Mammary epithelial cell (primary cell): ENCODE measurements at regions of chr15 and their contacts with region 1.

Region 1: DNA sequence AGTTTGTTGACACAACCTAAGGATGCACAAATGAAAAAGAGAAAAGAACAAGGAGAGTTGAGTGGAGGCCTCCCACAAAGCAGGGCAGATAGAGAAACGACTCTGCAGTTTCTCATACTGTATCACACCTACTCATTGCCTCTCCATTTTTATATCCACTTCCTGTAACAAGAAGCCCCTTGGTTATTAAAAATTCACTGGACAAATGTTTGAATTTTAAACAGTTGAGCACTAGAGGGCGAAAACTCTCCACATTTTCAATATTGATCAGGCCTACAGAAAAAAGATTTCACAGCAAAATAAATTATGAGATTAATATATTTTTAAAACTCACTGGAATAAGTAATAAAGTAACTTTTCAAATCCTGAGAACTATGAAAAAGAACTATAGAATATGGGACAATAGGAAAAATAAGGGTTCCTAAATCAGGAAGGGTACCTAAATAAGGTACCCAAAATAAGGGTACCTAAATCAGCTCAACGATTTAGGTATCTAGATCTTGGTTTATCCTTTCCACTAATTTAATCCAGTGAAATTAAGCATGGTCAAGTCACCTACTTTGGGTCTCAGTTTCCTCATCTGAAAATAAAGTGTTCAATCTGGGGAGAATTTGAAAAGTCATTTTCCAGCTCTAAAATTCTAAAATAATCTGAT is 47.0 kb upstream of the PPIB start:
- DNase-seq: peak; percentile 11
- H3K4me3 ChIP-seq: no peak overlapping the region
- H3K27ac ChIP-seq: no peak overlapping the region
- H3K4me1 ChIP-seq: no peaks in the 10 kb centered on the region
- H3K27me3 ChIP-seq: no peaks in the 10 kb centered on the region
- CTCF ChIP-seq: peak; percentile 9 to 32

Region 2: GRCh38 chr15:64478863-64479262 is 269.1 kb after region 1 on chr15:
- CTCF ChIA-PET with region 1: no interaction called
- dilution Hi-C with region 1: no loop called
- in situ Hi-C with region 1: no loop called
- intact Hi-C with region 1: no loop called
- DNase-seq: no peak
- H3K4me3 ChIP-seq: no peak overlapping the region
- H3K27ac ChIP-seq: no peak overlapping the region
- H3K4me1 ChIP-seq: no peaks in the 10 kb centered on the region
- H3K27me3 ChIP-seq: no peaks in the 10 kb centered on the region
- CTCF ChIP-seq: no peak

Region 3: DNA sequence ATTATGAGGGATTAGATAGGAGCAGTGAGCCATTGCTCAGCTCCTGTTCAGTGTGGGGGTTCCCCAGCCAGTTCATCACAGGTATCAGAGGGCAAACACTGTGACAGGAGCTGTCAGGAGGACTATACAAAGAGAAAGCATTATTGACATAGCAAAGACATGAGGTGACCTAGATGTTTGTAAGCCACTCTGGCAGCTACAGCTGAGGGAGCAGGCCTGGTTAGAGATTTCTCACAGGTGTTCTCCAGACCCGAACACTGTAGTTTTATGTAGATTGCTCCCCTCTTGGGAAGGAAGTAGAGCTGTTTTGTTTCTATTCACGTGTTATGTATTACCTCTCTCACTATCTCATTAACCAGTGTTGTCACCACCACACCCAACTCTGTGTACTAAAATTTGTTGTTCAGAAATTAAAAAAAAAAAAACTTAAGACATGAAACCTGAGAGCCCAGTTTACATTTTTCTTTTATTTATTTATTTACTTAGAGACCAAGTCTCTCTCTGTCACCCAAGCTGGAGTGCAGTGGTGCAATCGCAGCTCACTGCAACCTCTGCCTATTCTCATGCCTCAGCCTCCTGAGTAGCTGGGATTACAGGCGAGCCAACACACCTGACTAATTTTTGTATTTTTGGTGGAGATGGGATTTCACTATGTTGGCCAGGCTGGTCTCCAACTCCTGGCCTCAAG is 441.9 kb after region 1 on chr15:
- CTCF ChIA-PET with region 1: no interaction called
- dilution Hi-C with region 1: no loop called
- in situ Hi-C with region 1: no loop called
- intact Hi-C with region 1: loop called (anchors 10 kb)
- DNase-seq: peak; percentile 20
- H3K4me3 ChIP-seq: no peak overlapping the region
- H3K27ac ChIP-seq: no peak overlapping the region
- H3K4me1 ChIP-seq: no peaks in the 10 kb centered on the region
- H3K27me3 ChIP-seq: no peaks in the 10 kb centered on the region
- CTCF ChIP-seq: no peak